ENCODE measurements at regions of chrX and their contacts with region 1.

Region 1: DNA sequence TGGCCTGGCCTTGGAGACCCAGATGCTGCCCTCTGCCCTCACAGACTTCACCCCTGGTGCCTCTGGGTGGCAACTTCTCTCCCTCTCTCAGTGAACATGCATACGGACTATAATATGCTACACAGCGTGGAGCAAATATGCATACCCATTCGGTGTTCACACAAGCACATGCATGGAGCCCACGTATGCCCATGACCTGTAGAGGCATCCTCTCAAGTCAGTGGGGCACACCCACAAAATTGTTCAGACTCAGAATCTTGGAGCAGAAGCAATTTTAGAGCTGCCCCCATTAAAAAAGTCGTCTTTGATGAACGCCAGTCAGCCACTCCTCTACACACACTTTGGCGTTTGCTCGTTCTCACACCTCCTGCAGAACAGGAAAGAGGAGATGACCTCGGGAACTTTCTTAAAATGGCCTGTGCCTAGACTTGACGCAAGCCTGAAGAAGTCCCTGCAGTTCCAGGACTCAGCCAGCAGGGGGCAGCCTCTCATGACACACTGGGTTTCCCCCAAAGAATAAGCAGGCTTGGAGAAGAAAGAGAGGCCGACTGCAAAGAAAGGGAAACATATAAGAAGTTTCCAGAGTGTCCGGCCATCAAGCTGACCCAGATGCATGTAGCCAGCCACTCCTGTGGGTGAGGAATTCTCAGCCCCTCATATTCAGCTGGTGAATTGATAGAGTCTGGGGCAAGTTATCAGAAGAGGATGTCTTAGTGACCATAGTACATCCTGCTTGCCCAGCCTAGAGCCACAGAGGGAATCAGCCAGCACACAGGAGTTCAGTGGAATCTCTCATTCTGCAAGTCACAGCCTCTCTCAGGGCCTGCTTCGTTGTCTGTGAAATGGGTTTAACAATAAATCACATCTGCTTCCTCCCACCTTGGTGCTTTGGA is 17.3 kb downstream of the APLN start:
- DNase-seq: peak; percentile 60 to 72
- ATAC-seq: peak; percentile 71 to 91
- H3K4me3 ChIP-seq: no peak overlapping the region
- H3K27ac ChIP-seq: no peak overlapping the region
- H3K4me1 ChIP-seq: no peaks in the 10 kb centered on the region
- CTCF ChIP-seq: peak; percentile 74
- EP300 ChIP-seq: no peak
- POLR2A ChIP-seq: no peak
- RAD21 ChIP-seq: peak; percentile 76 to 83

Region 2: DNA sequence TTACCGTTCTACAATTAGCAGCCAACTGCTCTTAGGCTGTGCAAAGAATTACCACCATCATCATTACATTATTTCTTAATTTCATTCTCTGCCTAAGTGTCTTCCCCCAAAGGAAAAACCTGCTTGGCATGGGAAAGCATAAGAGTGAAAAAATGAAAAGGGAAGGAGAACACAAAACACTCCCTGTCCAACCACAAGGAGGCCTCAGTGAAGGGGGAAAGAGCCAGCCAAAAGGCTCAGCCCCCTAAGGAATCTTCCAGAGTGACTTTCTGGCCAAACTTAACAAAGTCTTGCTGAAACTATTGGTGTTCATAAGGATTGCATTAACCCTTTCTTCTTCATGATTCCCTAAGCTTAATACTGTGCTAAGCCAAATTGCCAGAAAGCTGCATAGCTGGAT is 401.6 kb before region 1 on chrX:
- CTCF ChIA-PET with region 1: no interaction called
- POLR2A ChIA-PET with region 1: no interaction called
- DNase-seq: no peak
- ATAC-seq: no peak
- H3K4me3 ChIP-seq: no peak overlapping the region
- H3K27ac ChIP-seq: no peak overlapping the region
- H3K4me1 ChIP-seq: no peaks in the 10 kb centered on the region
- CTCF ChIP-seq: no peak
- EP300 ChIP-seq: no peak
- POLR2A ChIP-seq: no peak
- RAD21 ChIP-seq: no peak

Region 3: GRCh38 chrX:129622757-129623341 is 14.6 kb before region 1 on chrX:
- CTCF ChIA-PET with region 1: interaction called, 24 read pairs
- POLR2A ChIA-PET with region 1: no interaction called
- DNase-seq: no peak
- ATAC-seq: no peak
- H3K4me3 ChIP-seq: no peak overlapping the region
- H3K27ac ChIP-seq: no peak overlapping the region
- H3K4me1 ChIP-seq: no peaks in the 10 kb centered on the region
- CTCF ChIP-seq: no peak
- EP300 ChIP-seq: no peak
- POLR2A ChIP-seq: no peak
- RAD21 ChIP-seq: no peak

Region 4: GRCh38 chrX:129654419-129655165 is 17.1 kb after region 1 on chrX and contains the start of gene APLN:
- CTCF ChIA-PET with region 1: interaction called, 17 read pairs
- POLR2A ChIA-PET with region 1: no interaction called
- DNase-seq: peak; percentile 21 to 35
- ATAC-seq: peak; percentile 82 to 83
- H3K4me3 ChIP-seq: peak within 1 kb of the TSS; percentile 50
- H3K27ac ChIP-seq: peak within 1 kb of the TSS; percentile 55 to 87; a peak in 5 of 6 replicates
- H3K4me1 ChIP-seq: peaks cover 7% of the 10 kb centered on the region; the same call in 2 of the 3 replicates
- CTCF ChIP-seq: no peak
- EP300 ChIP-seq: no peak
- POLR2A ChIP-seq: no peak; the same call in 1 of the 2 replicates
- RAD21 ChIP-seq: no peak
- polyA plus RNA-seq, gene APLN: 0.15 and 0.18 TPM in 2 replicates

Region 5: DNA sequence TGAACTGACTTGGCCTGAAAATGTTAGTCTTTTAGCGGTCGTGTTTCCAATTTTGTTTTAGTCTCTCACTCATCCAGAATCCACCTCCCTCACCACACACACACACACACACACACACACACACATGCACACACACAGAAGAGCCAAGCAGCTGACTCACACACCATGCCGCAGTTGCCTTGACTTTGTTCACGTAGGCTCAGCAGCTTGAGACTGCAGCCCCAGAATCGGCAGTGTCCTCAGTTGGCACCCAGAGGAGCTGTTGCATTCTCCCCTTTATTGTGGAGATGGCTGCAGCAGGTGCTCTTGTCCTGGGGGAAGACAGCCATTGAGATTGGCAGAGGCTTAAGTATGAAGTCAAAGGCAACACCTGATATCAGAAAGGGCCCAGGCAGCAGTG is 80.4 kb after region 1 on chrX:
- CTCF ChIA-PET with region 1: interaction called, 218 read pairs
- POLR2A ChIA-PET with region 1: no interaction called
- DNase-seq: peak in 1 of 2 experiments; percentile 7
- ATAC-seq: no peak
- H3K4me3 ChIP-seq: no peak overlapping the region
- H3K27ac ChIP-seq: no peak overlapping the region
- H3K4me1 ChIP-seq: no peaks in the 10 kb centered on the region
- CTCF ChIP-seq: no peak
- EP300 ChIP-seq: no peak
- POLR2A ChIP-seq: no peak
- RAD21 ChIP-seq: no peak

Region 6: DNA sequence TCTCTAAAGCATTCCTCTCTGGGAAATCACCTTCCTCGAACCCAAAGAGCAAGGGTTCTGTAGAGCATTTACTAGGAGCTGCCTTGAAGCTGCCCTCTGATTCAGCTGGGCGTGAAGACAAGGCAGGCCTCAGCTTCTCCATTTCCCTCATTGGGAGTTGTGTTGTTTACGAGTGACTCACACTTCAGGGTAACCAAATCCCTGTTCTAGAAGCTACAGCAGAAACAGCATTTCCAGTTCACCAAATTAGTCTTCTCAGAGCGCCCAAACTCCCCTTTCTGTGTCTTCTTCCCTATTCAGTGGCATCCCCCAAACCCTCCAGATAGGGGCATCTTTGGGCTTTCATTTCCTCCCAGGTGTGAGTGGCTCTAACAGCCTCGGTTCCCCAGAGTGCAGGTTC is 100.5 kb after region 1 on chrX:
- CTCF ChIA-PET with region 1: interaction called, 18 read pairs
- POLR2A ChIA-PET with region 1: no interaction called
- DNase-seq: no peak
- ATAC-seq: no peak
- H3K4me3 ChIP-seq: no peak overlapping the region
- H3K27ac ChIP-seq: no peak overlapping the region
- H3K4me1 ChIP-seq: no peaks in the 10 kb centered on the region
- CTCF ChIP-seq: no peak
- EP300 ChIP-seq: no peak
- POLR2A ChIP-seq: no peak
- RAD21 ChIP-seq: no peak

Region 7: GRCh38 chrX:129823115-129823514 is 185.7 kb after region 1 on chrX:
- CTCF ChIA-PET with region 1: interaction called, 18 read pairs
- POLR2A ChIA-PET with region 1: no interaction called
- DNase-seq: peak; percentile 36 to 58
- ATAC-seq: peak; percentile 73 to 88; a peak in 5 of 6 replicates
- H3K4me3 ChIP-seq: no peak overlapping the region
- H3K27ac ChIP-seq: no peak overlapping the region
- H3K4me1 ChIP-seq: no peaks in the 10 kb centered on the region
- CTCF ChIP-seq: peak; percentile 58
- EP300 ChIP-seq: no peak
- POLR2A ChIP-seq: no peak
- RAD21 ChIP-seq: peak; percentile 43 to 60; a peak in 3 of 5 replicates

Region 8: GRCh38 chrX:129876771-129877305 is 239.4 kb after region 1 on chrX:
- CTCF ChIA-PET with region 1: no interaction called
- POLR2A ChIA-PET with region 1: no interaction called
- DNase-seq: peak; percentile 15 to 42
- ATAC-seq: peak in 1 of 2 experiments; percentile 86; a peak in 4 of 6 replicates
- H3K4me3 ChIP-seq: no peak overlapping the region
- H3K27ac ChIP-seq: peak overlapping the region; percentile 22 to 30; a peak in 4 of 6 replicates
- H3K4me1 ChIP-seq: peaks cover 15% of the 10 kb centered on the region
- CTCF ChIP-seq: no peak
- EP300 ChIP-seq: no peak
- POLR2A ChIP-seq: no peak
- RAD21 ChIP-seq: no peak